ENCODE measurements at regions of chrX and their contacts with region 1.

Region 1: GRCh38 chrX:68822641-68823410 is 6.0 kb upstream of the EFNB1 start:
- DNase-seq: no peak
- H3K4me3 ChIP-seq: no peak overlapping the region
- H3K27ac ChIP-seq: no peak overlapping the region
- H3K27me3 ChIP-seq: peaks cover 3% of the 10 kb centered on the region
- CTCF ChIP-seq: peak; percentile 72

Region 2: DNA sequence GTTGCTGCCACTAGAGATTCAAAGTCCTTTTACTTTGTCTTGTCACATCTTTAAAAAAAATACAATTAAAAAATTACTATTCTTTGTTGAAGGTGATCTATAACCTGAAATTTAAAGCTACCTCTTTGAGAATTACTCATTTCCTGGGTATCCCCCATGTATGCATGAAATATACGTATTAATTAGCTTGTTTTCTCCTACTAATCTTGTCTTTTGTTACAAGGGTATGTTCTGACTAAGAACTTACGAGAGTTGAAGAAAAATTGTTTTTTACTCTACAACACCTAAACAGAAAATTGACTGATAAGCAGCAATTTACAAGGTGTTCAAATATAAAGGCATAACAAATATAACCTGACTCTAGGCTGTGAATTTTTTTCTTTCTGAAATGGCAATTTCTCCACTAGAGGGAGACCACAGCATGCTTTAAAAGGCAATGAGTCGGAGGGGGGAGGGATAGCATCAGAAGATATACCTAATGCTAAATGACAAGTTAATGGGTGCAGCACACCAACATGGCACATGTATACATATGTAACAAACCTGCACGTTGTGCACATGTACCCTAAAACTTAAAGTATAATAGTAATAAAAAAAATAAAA is 639.1 kb before region 1 on chrX:
- CTCF ChIA-PET with region 1: no interaction called
- POLR2A ChIA-PET with region 1: no interaction called
- DNase-seq: no peak
- H3K4me3 ChIP-seq: no peak overlapping the region
- H3K27ac ChIP-seq: no peak overlapping the region
- H3K27me3 ChIP-seq: no peaks in the 10 kb centered on the region
- CTCF ChIP-seq: peak; percentile 63

Region 3: DNA sequence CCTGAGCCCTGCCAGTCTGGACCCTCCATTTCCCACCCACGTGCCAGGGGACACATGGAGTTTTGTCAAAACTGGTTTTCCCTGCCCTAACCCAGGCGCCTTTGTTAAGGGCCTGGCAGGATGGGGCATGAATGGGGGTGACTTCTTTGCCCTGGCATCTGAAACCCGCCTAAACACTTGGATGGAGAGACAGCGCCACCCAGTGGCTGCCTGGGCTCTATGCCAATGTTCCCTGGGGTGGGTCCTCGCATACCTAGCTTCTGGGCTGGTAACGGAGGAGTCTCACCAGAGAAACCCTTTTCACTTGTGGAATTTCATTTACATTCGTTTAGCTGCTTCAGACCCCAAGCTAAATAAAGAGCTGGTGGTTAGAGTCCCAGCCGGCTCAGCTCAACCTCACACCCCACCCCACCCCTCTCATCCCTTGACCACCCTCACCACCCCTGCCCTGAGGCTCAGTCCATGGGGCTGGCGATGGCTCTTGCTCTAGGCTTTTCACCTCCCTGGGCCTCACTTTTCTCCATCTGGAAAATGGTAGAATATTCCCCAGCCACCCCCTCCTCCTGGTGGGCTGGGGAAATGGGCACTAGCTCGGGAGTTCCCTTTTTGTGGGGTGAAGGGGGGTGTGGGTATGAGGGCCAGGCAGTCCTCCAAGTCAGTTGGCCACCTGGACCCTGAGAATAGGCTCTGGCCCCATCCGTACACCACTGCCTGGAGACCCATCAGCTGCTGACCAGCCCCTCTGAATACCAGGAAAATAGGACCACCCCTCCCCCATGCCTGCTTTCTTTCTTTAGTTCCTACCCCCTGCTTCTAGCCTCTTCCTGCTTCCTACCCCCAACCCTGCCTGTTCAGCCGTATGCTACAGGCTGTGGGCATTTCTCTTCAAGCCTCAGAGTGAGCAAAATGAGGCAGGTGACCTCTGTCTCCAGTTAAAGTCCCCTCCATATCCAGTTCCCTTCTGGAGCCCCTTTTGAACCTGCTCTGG is 399.6 kb after region 1 on chrX:
- CTCF ChIA-PET with region 1: interaction called, 188 read pairs
- POLR2A ChIA-PET with region 1: interaction called, 13 read pairs
- DNase-seq: peak; percentile 15
- H3K4me3 ChIP-seq: no peak overlapping the region
- H3K27ac ChIP-seq: no peak overlapping the region
- H3K27me3 ChIP-seq: no peaks in the 10 kb centered on the region
- CTCF ChIP-seq: peak; percentile 80

Region 4: DNA sequence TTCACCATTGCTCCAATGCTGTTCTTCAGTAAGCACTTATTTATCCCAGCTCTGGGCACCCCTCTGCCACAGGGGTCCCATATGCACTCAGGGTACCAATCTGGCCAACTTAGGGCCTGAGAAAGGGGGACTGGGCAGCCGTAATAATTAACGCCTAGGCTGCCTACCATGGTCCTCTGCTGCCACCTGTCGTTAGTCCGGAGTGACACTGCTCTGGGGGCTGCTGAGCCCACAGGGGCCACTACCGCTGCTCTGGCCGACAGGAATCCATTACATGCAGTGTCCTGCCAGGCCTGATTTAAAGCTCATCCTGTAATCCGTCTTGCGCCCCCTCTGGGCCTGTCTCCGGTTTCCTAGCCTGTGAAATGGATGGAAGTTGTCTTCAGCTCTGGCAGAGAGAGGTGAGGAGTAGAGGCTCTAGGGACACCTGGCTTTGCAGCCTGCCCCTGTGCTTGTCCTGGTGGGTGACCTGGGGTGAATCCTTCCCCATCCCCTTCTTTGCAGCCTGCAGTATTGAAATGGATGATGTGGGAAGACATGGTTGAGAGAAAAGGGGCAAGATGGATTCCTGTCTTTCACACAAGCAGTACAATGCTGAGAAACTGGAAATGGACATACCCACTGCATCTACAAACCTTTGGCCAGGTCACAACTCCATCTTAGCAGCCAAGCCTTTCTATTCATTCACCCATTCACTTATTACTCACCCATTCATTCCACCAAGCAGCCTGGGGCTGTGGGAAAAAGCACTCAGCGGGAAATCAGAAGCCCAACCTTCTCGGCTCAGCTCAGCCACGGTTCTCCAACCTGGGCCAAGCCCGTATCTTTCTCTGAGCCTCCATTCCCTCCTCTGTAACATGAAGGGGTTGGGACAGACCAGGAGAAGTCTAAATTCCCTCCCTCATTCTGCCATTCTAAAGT is 565.0 kb after region 1 on chrX:
- CTCF ChIA-PET with region 1: interaction called, 14 read pairs
- POLR2A ChIA-PET with region 1: no interaction called
- DNase-seq: peak; percentile 4
- H3K4me3 ChIP-seq: no peak overlapping the region
- H3K27ac ChIP-seq: no peak overlapping the region
- H3K27me3 ChIP-seq: no peaks in the 10 kb centered on the region
- CTCF ChIP-seq: peak; percentile 66

Measured in AG04450 (cell line).